BJ (cell line): ENCODE measurements at regions of chr5 and their contacts with region 1.

Region 1: GRCh38 chr5:73215891-73216610 is 43.1 kb downstream of the TMEM174 start:
- DNase-seq: no peak
- H3K4me3 ChIP-seq: peak overlapping the region; percentile 45
- H3K27me3 ChIP-seq: no peaks in the 10 kb centered on the region
- CTCF ChIP-seq: peak; percentile 65

Region 2: GRCh38 chr5:72752909-72753308 is 463.1 kb before region 1 on chr5:
- CTCF ChIA-PET with region 1: no interaction called
- POLR2A ChIA-PET with region 1: no interaction called
- DNase-seq: no peak
- H3K4me3 ChIP-seq: no peak overlapping the region
- H3K27me3 ChIP-seq: peaks cover 2% of the 10 kb centered on the region; the same call in 1 of the 2 replicates
- CTCF ChIP-seq: no peak

Region 3: DNA sequence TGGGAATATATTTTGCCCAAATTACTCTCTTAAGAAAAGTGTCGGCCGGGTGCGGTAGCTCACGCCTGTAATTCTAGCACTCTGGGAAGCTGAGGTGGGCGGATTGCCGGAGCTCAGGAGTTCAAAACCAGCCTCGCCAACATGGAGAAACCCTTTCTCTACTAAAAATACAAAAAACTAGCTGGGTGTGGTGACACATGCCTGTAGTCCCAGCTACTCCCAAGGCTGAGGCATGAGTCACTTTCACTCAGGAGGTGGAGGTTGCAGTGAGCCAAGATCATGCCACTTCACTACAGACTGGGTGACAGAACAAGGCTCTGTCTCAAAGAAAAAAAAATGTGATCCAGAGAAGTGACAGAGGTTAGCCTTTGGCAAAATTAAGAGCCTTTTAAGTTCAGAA is 122.1 kb before region 1 on chr5:
- CTCF ChIA-PET with region 1: interaction called, 11 read pairs
- POLR2A ChIA-PET with region 1: no interaction called
- DNase-seq: peak; percentile 21
- H3K4me3 ChIP-seq: no peak overlapping the region
- H3K27me3 ChIP-seq: no peaks in the 10 kb centered on the region
- CTCF ChIP-seq: no peak

Region 4: DNA sequence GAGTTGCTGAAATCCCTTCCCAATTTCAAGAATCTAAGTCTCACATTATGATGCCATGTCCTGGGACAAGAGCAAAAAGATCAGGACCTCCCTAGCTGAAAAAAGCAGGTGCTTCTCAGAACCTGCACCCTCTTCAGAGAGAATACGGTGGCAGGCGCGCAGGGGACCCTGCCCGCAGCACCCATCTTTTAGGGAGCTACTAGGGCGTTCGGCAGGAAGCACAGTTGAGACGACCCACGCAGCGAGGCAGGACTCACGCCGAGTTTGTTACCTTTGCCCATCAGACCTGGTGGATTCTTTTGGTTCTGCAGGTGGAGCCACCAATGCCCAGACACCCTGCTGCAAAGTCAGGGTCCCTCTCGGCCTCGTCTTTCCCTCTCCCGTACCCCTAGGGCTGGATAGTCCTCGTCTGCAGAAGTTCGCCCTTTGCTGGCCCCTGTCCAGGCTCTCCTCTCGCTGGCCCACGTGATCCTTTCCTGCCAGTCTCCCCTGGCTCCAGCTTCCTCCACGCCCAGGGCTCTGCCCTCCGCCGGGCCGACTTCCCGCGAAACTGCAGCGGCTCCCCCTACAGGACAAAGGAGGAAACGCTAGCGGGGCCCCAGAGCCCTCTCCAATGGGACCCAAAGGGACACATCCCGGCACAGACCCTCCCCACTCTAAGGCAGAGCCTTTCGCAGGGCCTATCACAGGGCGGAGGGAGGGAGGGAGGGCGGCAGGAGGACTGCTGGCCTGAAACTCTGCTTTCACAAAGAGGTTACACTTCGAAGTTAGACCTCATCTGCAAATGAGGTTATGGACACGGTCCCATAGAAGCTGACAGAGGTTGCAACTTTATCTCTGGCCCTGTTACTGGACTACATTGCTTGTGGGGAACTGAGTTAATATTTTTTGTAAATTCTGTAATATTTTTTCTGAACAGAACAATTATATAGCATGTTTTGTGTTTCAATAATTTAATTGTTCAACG is 14.2 kb before region 1 on chr5:
- CTCF ChIA-PET with region 1: interaction called, 24 read pairs
- POLR2A ChIA-PET with region 1: no interaction called
- DNase-seq: no peak
- H3K4me3 ChIP-seq: no peak overlapping the region
- H3K27me3 ChIP-seq: peaks cover 13% of the 10 kb centered on the region
- CTCF ChIP-seq: peak; percentile 93

Region 5: DNA sequence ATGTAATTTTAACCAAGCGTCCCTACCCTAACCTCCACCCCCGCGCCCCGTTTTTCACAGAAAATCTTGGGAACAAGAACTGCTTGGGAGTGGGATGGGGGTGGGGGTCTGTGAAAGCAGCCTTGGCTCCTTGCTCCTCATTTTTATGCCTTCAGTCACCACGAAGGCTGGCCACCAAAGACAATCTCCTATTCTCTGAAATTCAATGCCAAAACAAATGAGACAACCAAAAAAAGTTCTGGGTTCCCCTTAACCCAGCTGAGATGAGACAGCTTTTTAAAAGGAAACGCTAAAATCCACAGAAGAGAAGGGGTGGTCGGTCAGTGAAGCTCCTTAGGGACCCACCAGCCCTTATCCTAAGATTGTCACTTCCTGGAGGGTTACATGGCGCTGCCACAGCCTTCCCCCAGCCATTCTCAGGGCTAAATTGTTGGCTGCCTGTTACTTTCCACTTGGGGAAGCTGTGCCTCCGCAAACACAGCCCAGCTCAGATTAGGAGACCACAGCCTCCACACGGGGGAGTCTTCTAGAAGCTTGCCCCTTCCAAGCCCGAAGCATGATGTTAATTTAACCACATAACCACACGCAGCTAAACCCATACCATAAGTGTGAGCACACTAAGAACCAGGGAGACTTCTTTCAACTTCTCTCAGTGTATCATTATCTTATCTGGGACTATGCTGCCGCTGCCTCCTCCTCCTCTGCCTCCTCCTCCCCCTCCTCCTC is 96.3 kb after region 1 on chr5:
- CTCF ChIA-PET with region 1: interaction called, 11 read pairs
- POLR2A ChIA-PET with region 1: no interaction called
- DNase-seq: no peak
- H3K4me3 ChIP-seq: no peak overlapping the region
- H3K27me3 ChIP-seq: no peaks in the 10 kb centered on the region
- CTCF ChIP-seq: peak; percentile 60

Region 6: DNA sequence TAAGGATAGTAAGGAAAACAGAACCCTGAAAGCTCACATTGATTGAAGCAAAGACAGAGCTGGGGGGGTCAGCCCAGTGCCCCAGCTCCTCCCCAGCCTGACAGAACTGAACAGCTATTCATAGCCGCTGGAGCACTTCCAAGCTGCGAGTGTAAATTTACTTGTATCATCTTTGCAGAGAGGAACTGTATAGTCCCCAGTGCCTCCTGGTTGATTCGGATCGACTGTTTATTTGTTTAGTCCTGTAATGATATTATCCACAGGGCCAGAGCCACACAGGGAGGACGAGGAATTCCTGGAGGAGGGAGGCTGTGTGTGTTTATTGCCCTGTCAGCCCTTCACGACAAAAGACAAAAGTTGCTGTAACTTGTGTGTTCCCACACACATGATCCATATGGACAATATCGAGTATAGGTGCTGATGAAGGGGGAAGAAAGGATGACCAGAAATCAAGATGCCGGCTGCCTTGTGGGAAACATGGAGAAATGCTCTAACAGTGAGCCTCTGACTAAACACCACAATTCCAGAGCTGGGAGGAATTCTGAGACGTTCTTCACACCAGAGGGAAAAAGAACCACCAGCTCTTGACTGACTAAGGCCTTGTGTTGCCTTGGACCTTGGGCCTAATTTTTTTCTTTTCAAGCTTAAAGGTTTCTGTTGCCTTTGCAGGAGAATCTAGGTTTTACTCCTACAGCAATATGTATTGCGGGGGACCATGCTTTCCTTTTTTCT is 201.4 kb after region 1 on chr5:
- CTCF ChIA-PET with region 1: interaction called, 14 read pairs
- POLR2A ChIA-PET with region 1: no interaction called
- DNase-seq: no peak
- H3K4me3 ChIP-seq: no peak overlapping the region
- H3K27me3 ChIP-seq: no peaks in the 10 kb centered on the region
- CTCF ChIP-seq: no peak

Region 7: GRCh38 chr5:73454351-73455036 is 238.4 kb after region 1 on chr5:
- CTCF ChIA-PET with region 1: interaction called, 84 read pairs
- POLR2A ChIA-PET with region 1: no interaction called
- DNase-seq: no peak
- H3K4me3 ChIP-seq: no peak overlapping the region
- H3K27me3 ChIP-seq: peaks cover 5% of the 10 kb centered on the region
- CTCF ChIP-seq: peak; percentile 93